Left cardiac atrium (tissue), 4 donors: ENCODE measurements at regions of chr12 and their contacts with region 1.

Region 1: DNA sequence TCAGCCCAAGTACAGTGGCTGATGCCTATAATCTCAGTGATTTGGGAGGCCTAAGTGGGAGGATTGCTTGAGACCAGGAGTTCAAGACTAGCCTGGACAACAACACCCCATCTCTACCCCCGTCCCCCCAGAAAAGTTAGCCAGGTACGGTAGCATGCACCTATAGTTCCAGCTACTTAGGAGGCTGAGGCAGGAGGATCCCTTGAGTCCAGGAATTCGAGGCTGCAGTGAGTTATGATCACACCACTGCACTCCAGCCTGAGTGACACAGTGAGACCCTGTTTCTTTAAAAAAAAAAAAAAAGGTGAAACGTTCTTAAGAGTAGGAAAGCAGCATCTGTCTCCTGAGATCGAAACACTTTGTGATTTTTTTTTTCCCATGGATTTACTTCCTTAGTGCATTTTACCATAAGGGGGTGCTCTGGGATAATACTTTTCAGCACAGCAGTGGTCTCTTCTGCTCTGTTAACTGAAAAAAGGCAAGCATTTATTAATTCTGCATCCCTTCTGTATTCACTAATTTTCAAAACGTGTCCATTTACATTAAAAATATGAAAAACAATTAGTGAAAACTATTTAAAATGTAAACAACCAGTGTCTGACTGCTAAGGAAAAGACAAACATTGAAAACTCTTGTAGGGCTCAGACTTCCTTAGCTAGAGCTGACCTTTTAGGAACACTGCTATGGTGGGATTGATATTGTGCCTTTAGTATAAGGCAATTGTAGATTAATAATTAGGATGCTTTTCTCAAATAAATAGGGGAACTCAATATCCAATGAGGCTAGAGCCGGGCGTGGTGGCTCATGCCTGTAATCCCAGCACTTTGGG is 31.2 kb upstream of the USP44 start:
- DNase-seq: no peak
- ATAC-seq: peak; percentile 49 to 55

Region 2: GRCh38 chr12:95262808-95263207 is 319.6 kb before region 1 on chr12:
- intact Hi-C with region 1: no loop called
- DNase-seq: no peak
- ATAC-seq: peak; percentile 35 to 65

Region 3: DNA sequence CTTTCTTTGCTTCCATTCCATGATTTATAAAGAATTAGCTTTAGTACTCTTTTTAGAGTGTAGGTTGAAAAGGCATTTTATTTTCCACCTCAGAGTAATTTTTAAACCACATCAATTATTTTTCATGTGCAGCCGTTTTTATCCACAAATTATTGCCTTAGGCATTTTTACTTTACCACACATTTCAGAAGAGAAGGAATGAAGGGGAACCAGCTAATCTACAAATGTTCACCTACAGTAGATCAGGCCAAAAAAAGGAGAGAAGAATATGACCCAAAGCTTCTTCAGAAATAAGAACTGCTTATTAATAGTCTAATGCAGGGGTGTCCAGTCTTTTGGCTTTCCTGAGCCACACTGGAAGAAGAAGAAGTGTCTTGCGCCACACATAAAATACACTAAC is 228.0 kb after region 1 on chr12:
- intact Hi-C with region 1: loop called (anchors 1 to 5 kb)
- DNase-seq: no peak
- ATAC-seq: no peak

Region 4: DNA sequence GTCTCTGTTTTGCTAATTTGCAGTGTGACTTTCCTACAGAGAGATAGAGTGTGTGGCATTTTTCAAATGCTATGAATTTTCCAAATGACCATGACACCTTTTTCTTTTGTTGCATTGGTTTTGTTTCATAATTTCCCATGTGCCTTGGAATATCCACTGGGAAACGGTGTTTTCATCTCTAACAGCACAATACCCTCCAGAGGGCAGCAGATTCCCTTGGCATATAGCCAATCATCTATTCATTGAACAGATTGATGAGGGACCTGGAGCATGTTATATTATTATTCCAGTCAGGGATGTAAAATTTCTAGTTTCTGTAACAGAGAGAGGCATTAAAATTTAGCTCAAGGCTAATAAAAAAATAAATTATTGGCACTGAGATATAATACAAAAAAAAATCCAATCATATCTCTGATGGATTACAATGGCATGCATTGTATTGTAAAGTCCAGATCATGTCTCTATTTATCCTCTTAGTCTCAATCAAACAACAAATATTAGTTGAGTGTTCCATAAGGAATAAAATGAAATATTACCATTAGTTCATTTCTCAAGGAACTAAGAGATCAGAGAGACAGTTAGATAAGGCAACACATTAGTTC is 237.8 kb after region 1 on chr12:
- intact Hi-C with region 1: loop called in 1 of 2 experiments (anchors 1 kb)
- DNase-seq: no peak
- ATAC-seq: peak in 1 of 2 donors; percentile 41

Region 5: GRCh38 chr12:95998611-95999286 is 416.3 kb after region 1 on chr12:
- intact Hi-C with region 1: loop called in 1 of 2 experiments (anchors 5 kb)
- DNase-seq: no peak
- ATAC-seq: peak; percentile 89 to 92